ENCODE measurements at regions of chr4 and their contacts with region 1.

Region 1: DNA sequence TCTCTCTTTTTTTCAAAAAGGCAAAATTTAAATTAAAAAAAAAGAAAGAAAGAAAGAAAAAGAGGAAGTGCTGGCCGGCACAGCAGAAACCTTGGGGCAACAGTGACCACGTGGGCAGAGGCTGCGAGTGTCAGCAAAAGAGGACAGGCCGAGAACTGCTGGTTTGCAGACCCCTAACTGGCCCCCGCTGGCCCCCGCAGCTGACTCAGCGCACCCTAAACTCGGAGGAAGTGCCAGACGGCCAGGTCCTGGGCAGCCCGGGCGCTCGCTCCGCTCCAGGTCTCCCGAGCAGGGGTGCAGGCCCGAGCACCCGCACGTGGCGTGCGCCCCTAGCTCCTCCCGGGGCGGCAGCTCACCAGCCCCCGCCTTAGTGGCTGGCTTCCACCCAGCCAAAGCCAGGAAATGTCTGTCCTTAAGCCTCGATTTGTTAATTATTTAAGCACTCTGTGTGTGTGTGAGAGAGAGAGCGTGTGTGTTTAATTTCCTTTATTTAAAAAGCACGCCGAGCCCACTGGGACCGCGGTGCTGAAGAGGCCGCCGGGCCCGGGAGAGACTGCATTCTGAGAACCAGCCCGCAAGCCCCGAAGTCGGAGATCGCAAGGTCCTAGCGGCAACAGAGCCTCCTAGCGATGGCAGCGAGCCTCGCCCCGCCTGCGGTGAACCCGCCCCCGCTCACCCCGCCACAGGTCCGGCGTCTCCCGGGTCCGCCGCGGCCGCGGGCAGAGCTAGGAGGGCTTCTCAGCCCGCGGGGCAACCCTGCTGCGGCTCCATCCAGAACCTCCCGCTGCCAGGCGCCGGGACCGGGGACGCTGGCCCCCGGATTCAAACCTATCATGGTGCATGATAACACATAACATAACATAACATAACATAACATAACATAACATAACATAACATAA is 46.0 kb upstream of the CDKN2AIP start:
- DNase-seq: peak; percentile 59
- H3K4me3 ChIP-seq: peak overlapping the region; percentile 52 to 56 (median 55)
- H3K27ac ChIP-seq: peak overlapping the region; percentile 45
- H3K4me1 ChIP-seq: peaks cover 9% of the 10 kb centered on the region
- H3K27me3 ChIP-seq: no peaks in the 10 kb centered on the region
- CTCF ChIP-seq: peak; percentile 53 to 83

Region 2: GRCh38 chr4:183261953-183262775 is 136.3 kb before region 1 on chr4:
- CTCF ChIA-PET with region 1: no interaction called
- dilution Hi-C with region 1: no loop called
- in situ Hi-C with region 1: no loop called
- intact Hi-C with region 1: loop called (anchors 2 kb)
- DNase-seq: peak; percentile 64
- H3K4me3 ChIP-seq: no peak overlapping the region
- H3K27ac ChIP-seq: no peak overlapping the region
- H3K4me1 ChIP-seq: no peaks in the 10 kb centered on the region
- H3K27me3 ChIP-seq: no peaks in the 10 kb centered on the region
- CTCF ChIP-seq: peak; percentile 85 to 92

Region 3: GRCh38 chr4:183287677-183288076 is 110.8 kb before region 1 on chr4:
- CTCF ChIA-PET with region 1: no interaction called
- dilution Hi-C with region 1: no loop called
- in situ Hi-C with region 1: no loop called
- intact Hi-C with region 1: loop called (anchors 2 kb)
- DNase-seq: no peak
- H3K4me3 ChIP-seq: no peak overlapping the region
- H3K27ac ChIP-seq: no peak overlapping the region
- H3K4me1 ChIP-seq: no peaks in the 10 kb centered on the region
- H3K27me3 ChIP-seq: no peaks in the 10 kb centered on the region
- CTCF ChIP-seq: no peak

Region 4: GRCh38 chr4:183326853-183327252 is 71.6 kb before region 1 on chr4:
- CTCF ChIA-PET with region 1: no interaction called
- dilution Hi-C with region 1: loop called (anchors 5 kb)
- in situ Hi-C with region 1: no loop called
- intact Hi-C with region 1: no loop called
- DNase-seq: peak; percentile 6
- H3K4me3 ChIP-seq: no peak overlapping the region
- H3K27ac ChIP-seq: no peak overlapping the region
- H3K4me1 ChIP-seq: peaks cover 4% of the 10 kb centered on the region
- H3K27me3 ChIP-seq: no peaks in the 10 kb centered on the region
- CTCF ChIP-seq: no peak

Region 5: DNA sequence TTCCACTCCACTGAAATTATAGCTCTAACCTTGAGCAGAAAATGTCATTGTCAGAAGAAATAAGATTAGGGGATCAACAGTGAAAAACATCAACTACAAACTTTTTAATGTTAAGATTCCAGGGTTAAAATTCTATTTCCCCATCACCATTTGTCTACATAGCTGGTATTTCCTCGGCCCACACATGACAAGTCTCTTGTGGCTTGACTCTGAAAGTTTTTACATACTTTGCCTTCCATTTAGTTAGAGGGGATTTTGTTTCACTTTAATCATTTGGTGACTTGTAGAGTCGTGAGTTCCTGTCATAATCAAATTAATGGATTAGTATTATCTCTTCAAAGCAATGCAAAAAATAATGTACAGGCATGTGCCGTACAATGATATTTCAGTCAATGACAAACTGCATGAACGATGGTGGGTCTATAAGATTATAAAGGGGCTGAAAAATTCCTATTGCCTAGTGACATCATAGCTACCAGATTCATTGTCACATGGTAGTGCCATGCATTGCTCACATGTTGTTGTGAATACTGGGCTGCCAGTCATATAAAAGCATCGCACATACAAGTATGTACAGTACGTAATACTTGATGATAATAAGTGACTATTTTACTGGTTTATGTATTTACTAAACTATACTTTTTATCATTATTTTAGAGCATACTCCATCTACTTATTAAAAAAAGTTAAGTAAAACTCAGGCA is 178.4 kb after region 1 on chr4:
- CTCF ChIA-PET with region 1: no interaction called
- dilution Hi-C with region 1: no loop called
- in situ Hi-C with region 1: no loop called
- intact Hi-C with region 1: no loop called
- DNase-seq: no peak
- H3K4me3 ChIP-seq: no peak overlapping the region
- H3K27ac ChIP-seq: no peak overlapping the region
- H3K4me1 ChIP-seq: no peaks in the 10 kb centered on the region
- H3K27me3 ChIP-seq: no peaks in the 10 kb centered on the region
- CTCF ChIP-seq: no peak

Region 6: DNA sequence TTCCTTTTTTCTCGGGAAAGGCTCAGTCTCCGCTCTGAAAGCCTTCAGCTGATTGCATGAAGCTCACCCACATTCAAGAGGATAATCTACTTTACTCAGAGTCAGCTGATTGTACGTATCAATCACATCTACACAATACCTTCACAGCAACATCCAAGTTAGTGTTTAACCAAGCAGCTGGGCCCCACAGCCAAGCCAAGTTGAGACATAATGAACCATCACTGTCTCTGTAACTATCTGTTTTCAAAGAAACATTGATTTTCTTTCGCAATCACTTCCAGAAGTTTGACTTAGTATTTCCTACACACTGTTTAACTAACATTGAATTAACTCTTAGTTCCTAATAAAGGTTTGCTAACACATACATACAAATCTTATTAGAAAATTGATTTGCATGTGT is 220.2 kb after region 1 on chr4:
- CTCF ChIA-PET with region 1: no interaction called
- dilution Hi-C with region 1: no loop called
- in situ Hi-C with region 1: no loop called
- intact Hi-C with region 1: no loop called
- DNase-seq: no peak
- H3K4me3 ChIP-seq: no peak overlapping the region
- H3K27ac ChIP-seq: no peak overlapping the region
- H3K4me1 ChIP-seq: no peaks in the 10 kb centered on the region
- H3K27me3 ChIP-seq: no peaks in the 10 kb centered on the region
- CTCF ChIP-seq: no peak